MCF 10A (cell line): ENCODE measurements at regions of chr5 and their contacts with region 1.

Region 1: GRCh38 chr5:127313847-127314473 is 23.4 kb downstream of the MEGF10 start:
- DNase-seq: peak; percentile 83
- H3K4me3 Mint-ChIP-seq: no peak overlapping the region
- H3K27ac Mint-ChIP-seq: no peak overlapping the region
- H3K4me1 Mint-ChIP-seq: no peaks in the 10 kb centered on the region
- H3K27me3 Mint-ChIP-seq: peaks cover 26% of the 10 kb centered on the region
- CTCF ChIP-seq: peak; percentile 93

Region 2: GRCh38 chr5:126837906-126838539 is 475.9 kb before region 1 on chr5:
- CTCF ChIA-PET with region 1: interaction called, 23 read pairs
- POLR2A ChIA-PET with region 1: no interaction called
- intact Hi-C with region 1: loop called (anchors 1 kb)
- DNase-seq: peak; percentile 13
- H3K4me3 Mint-ChIP-seq: no peak overlapping the region
- H3K27ac Mint-ChIP-seq: peak overlapping the region; percentile 8
- H3K4me1 Mint-ChIP-seq: no peaks in the 10 kb centered on the region
- H3K27me3 Mint-ChIP-seq: no peaks in the 10 kb centered on the region
- CTCF ChIP-seq: peak; percentile 48

Region 3: DNA sequence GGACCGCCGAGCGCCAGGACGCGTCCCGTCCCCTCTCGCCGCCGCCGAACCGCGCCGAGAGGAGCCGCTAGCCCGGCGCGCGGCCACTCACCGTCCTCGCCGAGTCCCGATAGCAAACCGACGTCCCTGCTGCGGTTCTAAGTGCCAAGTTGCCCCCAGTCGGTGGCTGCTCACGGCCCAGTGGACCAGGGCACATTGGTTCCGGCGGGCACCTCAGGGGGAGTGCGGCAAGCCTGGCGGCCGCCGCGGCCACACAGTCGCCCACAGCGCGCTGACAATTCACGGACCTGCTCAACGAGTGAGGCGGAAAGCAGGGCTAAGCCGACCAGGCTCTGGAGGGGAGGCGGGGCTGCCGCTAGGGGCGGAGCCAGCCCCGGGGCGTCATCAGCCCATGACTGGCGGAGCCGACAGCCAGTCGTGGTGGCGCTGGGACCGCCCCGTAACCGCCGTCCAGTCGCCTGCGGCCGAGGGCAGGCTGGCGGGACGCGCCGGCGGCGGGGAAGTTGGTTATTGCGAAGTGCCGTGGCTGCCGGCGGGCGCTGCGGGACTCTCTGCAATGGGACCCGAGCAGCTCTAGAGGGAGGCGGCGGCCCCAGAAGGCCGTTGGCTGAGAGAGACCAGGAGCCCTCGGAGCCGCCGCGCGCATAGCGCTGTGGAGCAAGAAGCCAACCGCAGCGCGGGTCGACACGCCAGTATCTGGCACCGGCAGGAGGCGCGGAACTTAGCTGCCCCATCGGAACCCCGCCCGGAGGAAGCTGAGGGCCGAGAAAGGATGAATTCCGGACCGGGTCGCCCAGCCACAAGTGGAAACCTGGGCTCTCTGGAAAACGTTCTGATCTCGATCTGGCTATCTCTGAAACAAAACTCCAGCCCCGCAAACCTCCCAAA is 283.5 kb before region 1 on chr5 and contains the start of gene MARCHF3:
- CTCF ChIA-PET with region 1: interaction called, 3 read pairs
- POLR2A ChIA-PET with region 1: interaction called, 4 read pairs
- intact Hi-C with region 1: loop called (anchors 1 kb)
- DNase-seq: peak; percentile 98
- H3K4me3 Mint-ChIP-seq: peak within 1 kb of the TSS; percentile 84
- H3K27ac Mint-ChIP-seq: peak within 1 kb of the TSS; percentile 49
- H3K4me1 Mint-ChIP-seq: peaks cover 15% of the 10 kb centered on the region
- H3K27me3 Mint-ChIP-seq: no peaks in the 10 kb centered on the region
- CTCF ChIP-seq: peak; percentile 39
- total RNA-seq, gene MARCHF3: 5.4 and 6.9 TPM in 2 replicates

Region 4: GRCh38 chr5:127296321-127296720 is 17.6 kb before region 1 on chr5:
- CTCF ChIA-PET with region 1: interaction called, 6 read pairs
- POLR2A ChIA-PET with region 1: no interaction called
- intact Hi-C with region 1: loop called (anchors 2 kb)
- DNase-seq: peak; percentile 79
- H3K4me3 Mint-ChIP-seq: no peak overlapping the region
- H3K27ac Mint-ChIP-seq: peak overlapping the region; percentile 25
- H3K4me1 Mint-ChIP-seq: peaks cover 13% of the 10 kb centered on the region
- H3K27me3 Mint-ChIP-seq: no peaks in the 10 kb centered on the region
- CTCF ChIP-seq: no peak

Region 5: GRCh38 chr5:127441799-127442484 is 128.0 kb after region 1 on chr5:
- CTCF ChIA-PET with region 1: interaction called, 7 read pairs
- POLR2A ChIA-PET with region 1: no interaction called
- intact Hi-C with region 1: loop called (anchors 1 kb)
- DNase-seq: peak; percentile 43
- H3K4me3 Mint-ChIP-seq: no peak overlapping the region
- H3K27ac Mint-ChIP-seq: no peak overlapping the region
- H3K4me1 Mint-ChIP-seq: no peaks in the 10 kb centered on the region
- H3K27me3 Mint-ChIP-seq: peaks cover 12% of the 10 kb centered on the region
- CTCF ChIP-seq: peak; percentile 55